ENCODE measurements at regions of chr11 and their contacts with region 1.

Region 1: DNA sequence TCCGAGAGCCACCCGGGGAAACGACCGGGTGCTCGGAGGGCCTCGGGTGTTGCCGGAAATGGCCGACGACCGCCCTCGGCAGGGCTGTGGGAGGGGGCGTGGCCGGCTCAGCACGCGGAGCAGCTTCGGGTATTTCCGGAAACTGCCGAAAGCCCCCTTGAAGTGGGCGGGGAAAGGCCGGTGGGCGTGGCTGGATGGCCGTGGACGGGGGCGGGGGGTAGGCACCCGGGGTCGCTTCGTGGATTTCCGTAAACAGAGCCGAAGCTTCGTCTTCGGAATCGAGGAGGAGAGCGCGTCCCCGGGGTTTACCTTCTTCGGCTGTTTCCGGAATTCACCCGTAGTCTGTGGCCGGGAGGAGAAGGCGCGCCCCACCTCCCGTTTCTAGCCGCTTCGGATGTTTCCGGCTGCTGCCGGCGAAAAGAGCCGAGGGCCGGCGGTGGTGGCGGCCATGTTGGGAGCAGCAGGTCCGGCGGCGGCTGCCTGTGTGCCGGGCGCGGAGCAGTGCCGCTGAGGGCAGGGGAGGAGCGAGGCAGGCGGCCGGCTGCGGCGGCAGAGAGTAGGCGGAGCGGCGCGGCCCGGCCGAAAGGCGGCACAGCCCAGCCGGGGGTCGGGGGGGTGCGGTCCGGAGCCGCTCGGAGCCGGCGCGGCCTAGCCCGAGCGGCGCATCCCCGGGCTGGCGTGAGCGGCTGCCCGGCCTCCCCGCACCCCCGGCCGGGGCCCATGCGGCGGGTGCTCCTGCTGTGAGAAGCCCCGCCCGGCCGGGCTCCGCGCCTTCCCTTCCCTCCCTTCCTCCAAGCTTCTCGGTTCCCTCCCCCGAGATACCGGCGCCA is at the start of gene MARK2:
- DNase-seq: peak; percentile 98 to 100 (median 99)

Region 2: GRCh38 chr11:63871962-63872799 is 33.3 kb after region 1 on chr11:
- intact Hi-C with region 1: loop called (anchors 2 kb)
- DNase-seq: peak; percentile 26 to 95 (median 74)

Region 3: GRCh38 chr11:63906585-63906984 is 67.7 kb after region 1 on chr11:
- intact Hi-C with region 1: loop called (anchors 2 kb)
- DNase-seq: peak in 3 of 10 donors; percentile 21 to 87 (median 52)

Region 4: DNA sequence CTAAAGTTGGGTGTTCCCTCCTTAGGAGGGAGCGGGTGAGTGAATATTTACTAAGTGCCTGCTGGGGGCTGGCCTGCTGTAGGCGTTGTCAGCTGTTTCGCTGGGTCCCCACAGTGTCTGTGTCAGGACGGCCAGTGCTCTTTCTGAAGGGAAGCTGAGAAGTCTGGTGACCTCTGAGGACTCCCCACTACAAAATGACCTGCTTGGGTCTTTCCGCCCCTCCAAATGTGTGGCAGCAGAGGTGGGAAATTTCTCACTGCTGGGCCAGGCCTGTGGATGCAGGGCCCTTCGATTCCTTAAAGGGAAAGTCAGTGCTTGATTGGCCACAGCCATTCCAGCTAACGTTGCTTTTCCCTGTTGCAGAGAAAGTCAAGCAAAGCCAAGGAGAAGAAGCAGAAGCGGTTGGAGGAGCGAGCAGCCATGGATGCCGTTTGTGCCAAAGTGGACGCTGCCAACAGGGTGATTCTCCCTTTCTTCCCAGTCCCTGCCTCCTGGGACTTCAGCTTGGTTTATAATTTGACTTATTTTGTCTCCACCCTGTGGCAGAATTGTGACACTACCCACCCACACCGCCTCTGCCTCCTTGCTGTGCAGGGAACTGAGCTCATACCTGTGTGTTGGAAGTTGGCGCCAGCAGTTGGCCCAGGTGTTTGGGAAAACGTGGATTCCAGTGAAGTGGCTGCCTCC is 106.7 kb after region 1 on chr11:
- intact Hi-C with region 1: loop called (anchors 1 kb)
- DNase-seq: peak; percentile 47 to 95 (median 72)

Region 5: DNA sequence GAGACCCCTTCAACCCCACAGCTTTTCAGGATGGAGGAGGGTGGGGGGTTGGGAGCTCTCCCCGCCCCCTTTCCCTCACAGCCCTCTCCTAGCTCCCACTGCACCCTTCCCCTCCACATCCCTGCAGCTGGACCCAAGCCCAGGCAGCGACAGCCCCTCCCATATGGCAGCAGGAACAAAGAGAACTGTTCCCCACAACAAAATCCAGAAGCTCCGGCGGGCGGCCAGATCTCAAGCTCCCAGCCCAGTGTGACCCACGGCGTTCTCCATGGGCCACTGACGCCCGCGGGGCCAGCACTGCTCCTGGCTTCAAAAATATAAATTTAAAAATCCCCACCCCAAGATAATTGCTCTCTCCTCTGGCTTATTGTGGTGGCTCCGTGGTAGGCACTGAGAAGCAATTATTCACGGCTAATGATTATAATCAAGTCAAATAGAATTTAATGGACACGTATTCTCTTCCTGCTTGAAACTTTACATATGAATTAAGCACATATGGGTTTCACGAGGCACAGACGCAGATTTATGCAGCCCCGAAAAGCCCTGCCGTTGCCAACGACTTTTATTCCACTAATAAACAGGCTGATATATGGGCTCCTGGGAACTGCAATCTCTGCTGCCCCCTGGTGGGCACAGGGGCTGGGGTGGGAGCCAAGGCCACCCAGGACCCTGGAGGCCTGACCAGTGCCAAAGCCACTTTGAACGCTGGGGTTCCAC is 309.5 kb after region 1 on chr11:
- intact Hi-C with region 1: loop called (anchors 2 kb)
- DNase-seq: peak; percentile 80 to 98 (median 92)